H1 (cell line): ENCODE measurements at regions of chr7 and their contacts with region 1.

Region 1: DNA sequence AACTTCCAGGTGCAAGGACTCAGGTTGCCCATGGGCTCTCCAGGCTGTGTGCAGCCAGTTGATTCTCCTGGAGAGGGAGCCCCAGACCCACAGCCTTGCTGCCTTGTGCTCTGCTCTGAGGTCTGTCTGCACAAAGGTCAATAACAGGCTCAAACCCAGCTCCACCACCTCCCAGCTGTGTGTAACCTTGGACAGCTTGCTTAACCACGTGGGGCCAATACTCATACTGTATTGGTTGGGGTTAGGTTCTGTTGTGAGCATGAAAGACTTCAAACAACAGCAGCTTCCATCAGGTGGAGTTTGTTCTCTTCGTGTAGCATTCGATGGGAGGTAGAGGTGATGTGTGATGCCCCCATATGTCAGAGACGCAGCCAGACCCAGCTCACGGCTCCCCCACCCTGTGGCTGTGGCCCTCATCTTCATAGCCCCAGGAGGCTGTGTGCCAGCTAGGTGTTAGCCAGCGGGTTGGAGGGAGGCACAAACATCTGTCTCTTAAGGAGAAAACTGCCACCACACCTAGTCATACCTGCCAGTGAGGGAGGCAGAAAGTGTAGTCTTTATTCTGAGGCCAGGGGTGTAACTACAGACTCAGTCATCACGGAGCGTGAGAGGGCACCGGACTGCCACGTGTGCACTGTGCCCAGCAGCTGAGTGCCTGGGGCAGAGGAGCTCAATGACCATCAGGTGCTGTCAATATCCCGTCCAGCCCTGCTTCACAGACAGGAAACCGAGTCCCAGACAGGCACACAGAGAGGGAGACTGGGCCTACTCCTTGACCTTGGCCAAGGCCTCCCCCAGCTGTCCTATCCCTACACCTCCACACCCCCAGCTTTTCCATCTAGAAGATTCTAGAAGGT is 8.1 kb upstream of the POLD2 start:
- DNase-seq: no peak
- H3K4me3 ChIP-seq: no peak overlapping the region
- H3K27ac ChIP-seq: no peak overlapping the region
- H3K4me1 ChIP-seq: peaks cover 0 to 12% (median 3%) of the 10 kb centered on the region in 4 experiments; a peak in 4 of 7 replicates
- H3K27me3 ChIP-seq: peaks cover 0 to 16% (median 6%) of the 10 kb centered on the region in 4 experiments; a peak in 6 of 7 replicates
- CTCF ChIP-seq: peak; percentile 66 to 75 (median 68)
- EP300 ChIP-seq: no peak
- POLR2A ChIP-seq: no peak
- RAD21 ChIP-seq: peak; percentile 71 to 83

Region 2: DNA sequence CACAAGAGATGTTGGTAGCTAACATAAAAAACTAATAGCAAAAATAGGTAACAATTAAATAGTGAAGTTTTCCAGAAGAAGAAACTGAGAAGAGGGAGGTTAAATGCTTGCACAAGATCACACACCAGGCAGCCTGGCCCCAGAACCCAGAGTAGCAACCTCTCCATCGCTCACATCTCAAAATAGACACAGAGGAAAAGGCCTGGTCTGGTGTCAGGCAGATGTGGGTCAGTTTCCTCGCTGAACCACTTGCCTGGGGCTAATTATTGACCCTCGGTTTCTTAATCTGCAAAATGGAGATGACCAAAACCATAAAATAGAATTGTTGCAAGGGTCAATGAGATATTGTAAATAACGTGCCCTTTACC is 593.0 kb before region 1 on chr7:
- CTCF ChIA-PET with region 1: no interaction called
- POLR2A ChIA-PET with region 1: no interaction called
- DNase-seq: no peak
- H3K4me3 ChIP-seq: no peak overlapping the region
- H3K27ac ChIP-seq: no peak overlapping the region
- H3K4me1 ChIP-seq: peaks cover 0 to 8% (median under 1%) of the 10 kb centered on the region in 4 experiments; a peak in 2 of 7 replicates
- H3K27me3 ChIP-seq: no peaks in the 10 kb centered on the region
- CTCF ChIP-seq: no peak
- EP300 ChIP-seq: no peak
- POLR2A ChIP-seq: no peak
- RAD21 ChIP-seq: no peak

Region 3: DNA sequence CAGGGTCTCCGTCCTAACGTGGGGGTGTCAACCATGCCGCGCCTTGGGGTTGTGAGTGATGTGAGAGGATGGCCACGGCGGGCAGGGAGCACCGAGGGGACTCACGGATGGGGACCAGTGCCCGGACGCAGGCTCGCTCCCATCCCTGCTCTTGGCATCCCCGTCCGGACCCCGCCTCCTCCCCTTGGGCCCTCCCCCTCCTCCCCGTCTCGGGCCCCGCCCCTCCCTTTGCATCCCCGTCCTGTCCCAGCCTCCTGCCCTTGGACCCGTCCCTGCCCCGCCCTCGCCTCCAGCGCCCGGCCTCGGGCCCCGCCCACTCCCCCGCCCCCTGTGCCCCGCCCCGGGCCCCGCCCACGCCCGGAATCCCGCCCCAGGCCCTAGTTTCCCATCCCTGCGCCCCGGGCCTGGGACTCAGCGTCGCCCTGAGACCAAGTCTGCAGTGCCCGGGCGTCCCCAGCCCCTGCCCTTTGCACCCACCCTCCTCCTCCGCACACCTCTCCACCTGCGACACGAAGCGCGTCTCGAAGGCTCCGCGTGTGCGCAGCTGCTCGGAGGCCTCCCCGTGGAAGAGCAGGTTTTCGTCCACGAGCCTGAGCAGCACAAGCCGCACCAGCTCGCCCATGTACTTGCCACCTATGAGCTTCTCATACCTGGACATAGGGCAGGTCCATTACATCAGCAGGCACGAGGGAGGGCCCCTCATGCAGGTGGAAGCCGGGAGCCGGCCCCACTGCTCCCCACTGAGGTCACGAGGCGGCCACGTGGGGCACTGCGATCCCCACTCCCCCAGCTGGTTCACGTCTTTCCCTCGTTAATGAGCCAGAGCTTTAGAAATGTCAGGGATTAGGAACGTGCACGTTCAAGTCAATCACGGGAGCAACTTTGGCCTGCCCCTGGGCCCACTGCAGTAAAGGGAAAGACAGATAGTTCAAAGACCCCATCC is 14.8 kb after region 1 on chr7:
- CTCF ChIA-PET with region 1: interaction called, 27 read pairs
- POLR2A ChIA-PET with region 1: interaction called, 6 read pairs
- DNase-seq: peak; percentile 76 to 92
- H3K4me3 ChIP-seq: peak overlapping the region; percentile 12 to 68 (median 33); a peak in 7 of 8 replicates
- H3K27ac ChIP-seq: no peak overlapping the region
- H3K4me1 ChIP-seq: peaks cover 0 to 20% (median 8%) of the 10 kb centered on the region in 4 experiments; a peak in 4 of 7 replicates
- H3K27me3 ChIP-seq: peaks cover 13 to 27% (median 22%) of the 10 kb centered on the region in 4 experiments
- CTCF ChIP-seq: no peak
- EP300 ChIP-seq: no peak
- POLR2A ChIP-seq: no peak
- RAD21 ChIP-seq: no peak

Region 4: DNA sequence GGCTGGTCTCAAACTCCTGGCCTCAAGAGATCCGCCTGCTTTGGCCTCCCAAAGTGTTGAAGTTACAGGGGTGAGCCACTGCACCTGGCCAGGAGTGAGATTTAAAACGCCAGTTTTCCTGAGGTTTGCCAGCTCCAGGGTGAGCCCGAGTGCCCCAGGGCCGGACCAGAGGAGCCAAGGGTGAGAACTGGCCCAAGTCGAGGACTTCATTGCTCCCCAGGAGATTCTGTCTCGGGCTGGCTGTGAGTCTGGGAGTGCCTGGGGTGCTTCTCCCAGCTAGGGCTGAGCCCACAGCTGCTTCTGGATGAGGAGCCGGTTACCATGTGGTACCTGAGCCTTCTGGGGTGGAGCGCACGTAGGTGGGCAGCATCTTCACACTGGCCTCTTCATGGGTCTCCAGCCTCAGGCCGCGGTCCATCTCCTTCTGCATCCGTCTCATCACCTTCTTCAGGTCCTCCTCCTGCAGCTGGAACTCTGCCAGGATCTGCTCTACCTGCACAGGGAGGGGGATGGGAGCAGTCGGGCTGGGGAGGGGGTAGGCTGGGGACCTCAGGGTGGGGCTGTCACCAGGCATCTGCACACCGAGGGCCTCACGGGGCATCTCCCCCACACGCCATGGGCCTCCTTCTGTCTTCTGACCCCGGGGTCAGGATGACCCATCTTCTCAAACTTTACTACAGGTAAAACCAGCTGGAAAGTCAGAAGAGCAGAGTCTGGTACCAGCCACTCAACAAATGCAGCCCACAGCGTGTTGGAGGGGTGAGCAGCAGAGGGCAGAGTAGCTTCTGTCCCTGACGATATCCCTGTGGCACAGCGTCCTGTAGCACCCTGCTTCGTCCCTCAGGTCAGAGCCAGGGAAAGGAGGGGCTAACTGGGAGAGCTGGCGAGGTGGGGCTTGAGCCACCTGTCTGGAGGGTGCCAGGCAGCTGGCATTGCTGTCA is 21.8 kb after region 1 on chr7:
- CTCF ChIA-PET with region 1: interaction called, 16 read pairs
- POLR2A ChIA-PET with region 1: interaction called, 6 read pairs
- DNase-seq: no peak
- H3K4me3 ChIP-seq: no peak overlapping the region
- H3K27ac ChIP-seq: no peak overlapping the region
- H3K4me1 ChIP-seq: no peaks in the 10 kb centered on the region
- H3K27me3 ChIP-seq: no peaks in the 10 kb centered on the region; a peak in 2 of 7 replicates
- CTCF ChIP-seq: peak in 2 of 3 experiments; percentile 21 to 35; a peak in 2 of 4 replicates
- EP300 ChIP-seq: no peak
- POLR2A ChIP-seq: no peak
- RAD21 ChIP-seq: peak; percentile 25 to 42; a peak in 3 of 4 replicates

Region 5: GRCh38 chr7:44212018-44212417 is 80.6 kb after region 1 on chr7:
- CTCF ChIA-PET with region 1: interaction called, 16 read pairs
- POLR2A ChIA-PET with region 1: no interaction called
- DNase-seq: no peak
- H3K4me3 ChIP-seq: no peak overlapping the region
- H3K27ac ChIP-seq: no peak overlapping the region
- H3K4me1 ChIP-seq: peaks cover 0 to 11% (median 5%) of the 10 kb centered on the region in 4 experiments; a peak in 5 of 7 replicates
- H3K27me3 ChIP-seq: no peaks in the 10 kb centered on the region
- CTCF ChIP-seq: no peak
- EP300 ChIP-seq: no peak
- POLR2A ChIP-seq: no peak
- RAD21 ChIP-seq: no peak

Region 6: GRCh38 chr7:44218418-44219201 is 87.2 kb after region 1 on chr7:
- CTCF ChIA-PET with region 1: interaction called, 12 read pairs
- POLR2A ChIA-PET with region 1: no interaction called
- DNase-seq: peak; percentile 57 to 79
- H3K4me3 ChIP-seq: peak overlapping the region in 1 of 4 experiments; percentile 19; a peak in 1 of 8 replicates
- H3K27ac ChIP-seq: no peak overlapping the region
- H3K4me1 ChIP-seq: peaks cover 0 to 24% (median 19%) of the 10 kb centered on the region in 4 experiments; a peak in 6 of 7 replicates
- H3K27me3 ChIP-seq: no peaks in the 10 kb centered on the region
- CTCF ChIP-seq: peak in 2 of 3 experiments; percentile 41 to 42; a peak in 2 of 4 replicates
- EP300 ChIP-seq: no peak
- POLR2A ChIP-seq: no peak
- RAD21 ChIP-seq: peak in 1 of 2 experiments; percentile 31; a peak in 3 of 4 replicates